Gastrocnemius medialis (tissue), 4 donors: ENCODE measurements at regions of chr3 and their contacts with region 1.

Region 1: GRCh38 chr3:45760878-45761711 is 35.2 kb downstream of the SLC6A20 start:
- DNase-seq: peak; percentile 49 to 62
- ATAC-seq: peak; percentile 89 to 95
- H3K4me3 ChIP-seq: no peak overlapping the region
- H3K27ac ChIP-seq: no peak overlapping the region
- H3K4me1 ChIP-seq: no peaks in the 10 kb centered on the region
- H3K27me3 ChIP-seq: no peaks in the 10 kb centered on the region
- CTCF ChIP-seq: peak; percentile 73 to 89 (median 83)
- POLR2A ChIP-seq: no peak

Region 2: GRCh38 chr3:45670991-45671390 is 90.1 kb before region 1 on chr3:
- in situ Hi-C with region 1: no loop called
- intact Hi-C with region 1: no loop called
- DNase-seq: no peak
- ATAC-seq: no peak
- H3K4me3 ChIP-seq: no peak overlapping the region
- H3K27ac ChIP-seq: peak overlapping the region in 1 of 4 donors; percentile 0
- H3K4me1 ChIP-seq: peaks cover 14 to 34% of the 10 kb centered on the region in 2 donors
- H3K27me3 ChIP-seq: no peaks in the 10 kb centered on the region
- CTCF ChIP-seq: no peak
- POLR2A ChIP-seq: no peak

Region 3: DNA sequence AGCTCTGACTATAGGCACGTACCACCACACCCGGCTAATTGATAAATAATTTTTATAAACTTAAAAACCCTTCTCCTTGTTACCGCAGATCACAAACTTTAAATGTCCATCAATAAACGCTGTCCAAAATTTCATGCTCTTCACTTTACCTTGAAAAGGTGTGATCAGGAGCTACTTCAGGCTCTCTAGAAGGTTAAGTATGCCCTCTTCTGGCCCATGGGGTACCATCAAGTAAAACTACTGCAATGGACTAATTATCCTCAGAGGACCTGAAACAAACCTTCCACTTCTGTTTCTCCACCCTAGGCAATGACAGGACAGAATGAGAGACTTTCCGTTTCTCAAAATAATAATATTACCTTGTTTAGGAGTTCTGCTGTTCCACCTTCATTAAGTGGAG is 71.6 kb after region 1 on chr3:
- in situ Hi-C with region 1: loop called in 3 of 4 experiments (anchors 5 kb)
- intact Hi-C with region 1: loop called (anchors 1 kb)
- DNase-seq: no peak
- ATAC-seq: peak; percentile 58 to 64
- H3K4me3 ChIP-seq: no peak overlapping the region
- H3K27ac ChIP-seq: no peak overlapping the region
- H3K4me1 ChIP-seq: no peaks in the 10 kb centered on the region
- H3K27me3 ChIP-seq: no peaks in the 10 kb centered on the region
- CTCF ChIP-seq: peak; percentile 39 to 68 (median 49)
- POLR2A ChIP-seq: no peak

Region 4: DNA sequence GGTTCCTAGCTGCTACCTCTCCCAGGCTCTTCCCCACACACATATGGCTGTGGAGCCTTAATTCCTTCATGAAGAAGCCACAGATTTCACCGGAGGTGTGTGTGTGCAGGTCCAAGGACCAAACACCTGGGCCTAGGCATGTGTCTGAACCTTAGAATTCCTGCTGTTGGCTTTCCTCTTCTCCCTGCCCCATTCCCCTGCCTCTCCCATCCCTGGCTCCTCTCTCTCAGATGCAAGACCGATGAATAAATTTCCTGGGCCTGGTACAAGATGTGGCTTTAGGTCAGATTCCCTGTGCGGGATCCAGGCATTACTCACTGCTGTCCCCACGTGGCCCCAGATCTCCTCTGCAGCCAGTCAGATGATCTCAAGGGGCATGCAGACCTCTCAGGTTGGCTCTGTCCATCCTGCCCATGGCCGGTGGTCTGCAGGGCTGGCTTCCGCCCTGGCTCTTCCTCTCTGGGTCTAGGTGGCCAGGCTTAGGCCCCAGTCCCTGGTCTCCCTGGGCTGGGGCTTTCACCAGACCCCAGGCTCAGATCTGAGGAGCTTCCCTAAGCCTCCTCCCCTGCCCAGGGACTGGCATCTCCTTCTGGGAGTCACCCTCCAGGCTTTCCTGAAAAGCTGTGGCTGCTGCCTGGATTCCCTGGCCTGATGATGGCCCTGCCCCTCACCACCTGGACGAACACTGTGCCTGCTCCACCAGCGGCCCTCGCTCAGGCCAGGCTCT is 145.7 kb after region 1 on chr3:
- in situ Hi-C with region 1: loop called in 3 of 4 experiments (anchors 25 kb)
- intact Hi-C with region 1: loop called (anchors 2 kb)
- DNase-seq: peak; percentile 20 to 48
- ATAC-seq: peak; percentile 68 to 81
- H3K4me3 ChIP-seq: no peak overlapping the region
- H3K27ac ChIP-seq: peak overlapping the region in 1 of 4 donors; percentile 53
- H3K4me1 ChIP-seq: peaks cover 3 to 19% of the 10 kb centered on the region in 2 donors
- H3K27me3 ChIP-seq: no peaks in the 10 kb centered on the region
- CTCF ChIP-seq: peak in 3 of 5 experiments; percentile 16 to 43 (median 37)
- POLR2A ChIP-seq: no peak

Region 5: DNA sequence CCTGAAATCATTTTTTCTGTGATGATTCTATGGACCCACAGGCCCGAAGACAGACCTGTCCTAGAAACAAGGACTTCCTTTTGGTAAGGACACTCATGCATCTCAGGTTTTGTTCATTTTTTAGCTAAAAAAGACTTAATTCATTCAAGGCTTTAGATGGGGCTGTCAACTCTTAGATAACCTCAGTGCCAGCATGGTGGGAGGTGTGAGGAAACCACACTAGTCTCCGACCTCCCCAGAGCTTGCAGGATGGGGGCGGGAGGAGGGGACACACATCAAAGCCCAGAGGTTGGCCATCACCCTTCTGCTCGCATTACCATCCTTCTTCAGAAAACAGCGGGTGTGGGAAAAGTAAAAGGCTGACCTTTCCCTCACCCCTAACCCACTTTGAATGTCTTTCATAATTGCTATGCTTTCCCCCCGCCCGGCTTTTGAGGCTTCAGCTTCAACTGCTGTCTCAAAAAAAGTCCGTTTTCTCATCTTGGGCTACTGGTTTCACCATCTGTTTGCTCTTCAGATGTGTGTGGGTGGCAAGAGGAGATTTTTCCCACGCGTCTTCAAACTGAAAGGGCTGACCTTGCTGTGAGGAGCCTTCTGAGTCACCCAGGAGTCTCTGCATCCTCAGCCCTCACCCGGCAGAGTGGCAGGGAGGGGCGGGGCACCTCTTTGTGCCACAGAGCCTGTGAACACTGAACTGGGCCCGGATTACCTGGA is 154.6 kb after region 1 on chr3:
- in situ Hi-C with region 1: loop called in 3 of 4 experiments (anchors 25 kb)
- intact Hi-C with region 1: no loop called
- DNase-seq: no peak
- ATAC-seq: peak in 1 of 2 donors; percentile 22
- H3K4me3 ChIP-seq: no peak overlapping the region
- H3K27ac ChIP-seq: no peak overlapping the region
- H3K4me1 ChIP-seq: no peaks in the 10 kb centered on the region
- H3K27me3 ChIP-seq: no peaks in the 10 kb centered on the region
- CTCF ChIP-seq: no peak
- POLR2A ChIP-seq: no peak

Region 6: DNA sequence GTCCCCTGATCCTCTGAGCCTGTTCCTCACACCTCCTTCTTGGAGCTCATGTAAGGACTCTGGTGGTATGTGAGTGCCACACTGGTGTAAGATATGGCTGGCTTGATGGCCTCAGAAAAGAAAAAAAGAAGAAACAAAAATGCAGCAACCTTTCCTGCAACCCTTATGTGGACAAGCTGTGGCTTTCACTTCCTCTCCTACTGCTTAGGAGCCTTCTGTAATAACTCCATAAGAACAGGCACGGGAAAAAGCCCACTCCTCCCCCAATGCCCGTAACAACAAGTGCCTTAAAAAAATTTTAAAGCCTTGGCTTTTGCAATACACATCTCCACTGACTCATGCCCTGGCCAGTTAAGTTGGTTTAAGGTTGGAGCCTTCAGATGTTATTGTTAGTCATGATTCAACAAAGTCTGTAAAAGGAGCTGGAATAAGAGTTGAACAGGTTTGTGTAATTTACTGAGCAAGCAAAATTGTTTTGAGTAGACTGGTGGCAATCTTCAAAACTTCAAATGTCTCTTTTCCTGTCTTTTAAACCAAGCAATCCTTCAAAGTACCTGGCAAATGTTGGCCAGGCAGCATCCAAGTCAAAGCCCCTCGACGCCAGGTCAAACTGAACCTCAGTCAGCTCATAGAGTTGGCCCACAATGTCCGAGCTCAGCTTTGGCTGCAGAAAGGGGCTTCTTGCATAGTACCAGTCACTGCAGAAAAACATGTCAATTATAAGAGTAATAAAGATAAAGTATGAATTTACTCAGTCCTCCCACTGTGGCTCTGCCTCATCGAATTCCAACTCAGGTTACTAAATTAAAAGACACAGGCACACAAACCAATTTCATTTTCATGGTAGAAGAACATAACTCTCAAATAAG is 211.7 kb after region 1 on chr3:
- in situ Hi-C with region 1: no loop called
- intact Hi-C with region 1: no loop called
- DNase-seq: peak; percentile 62 to 63
- ATAC-seq: peak; percentile 73 to 79
- H3K4me3 ChIP-seq: no peak overlapping the region
- H3K27ac ChIP-seq: peak overlapping the region; percentile 73 to 100 (median 98)
- H3K4me1 ChIP-seq: peaks cover 43 to 80% of the 10 kb centered on the region in 2 donors
- H3K27me3 ChIP-seq: no peaks in the 10 kb centered on the region
- CTCF ChIP-seq: no peak
- POLR2A ChIP-seq: peak in 1 of 2 donors; percentile 37

Region 7: DNA sequence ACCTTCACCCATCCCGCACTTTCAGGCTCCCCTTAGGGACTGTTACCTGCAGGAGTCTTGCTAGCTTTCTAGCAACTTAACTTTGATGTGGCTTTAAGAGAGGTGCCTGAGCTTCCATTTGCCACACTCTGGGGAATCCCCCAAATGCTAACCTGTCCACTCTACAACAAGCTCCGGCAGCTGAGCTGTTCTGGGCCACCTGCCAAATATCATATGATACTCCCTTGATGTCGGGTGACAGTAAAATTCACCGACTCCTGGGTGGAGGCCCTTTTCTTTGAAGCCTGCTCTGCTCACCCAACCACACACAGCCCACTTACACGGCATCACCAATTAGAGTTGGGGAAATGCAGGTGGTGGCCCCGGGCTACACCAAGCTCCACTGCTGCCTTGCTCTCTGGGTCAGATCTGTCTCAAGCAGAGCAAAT is 304.2 kb after region 1 on chr3:
- in situ Hi-C with region 1: loop called in 3 of 4 experiments (anchors 10 to 25 kb)
- intact Hi-C with region 1: no loop called
- DNase-seq: peak; percentile 82 to 85
- ATAC-seq: peak; percentile 96 to 98
- H3K4me3 ChIP-seq: no peak overlapping the region
- H3K27ac ChIP-seq: peak overlapping the region; percentile 49 to 79 (median 74)
- H3K4me1 ChIP-seq: peaks cover 33 to 47% of the 10 kb centered on the region in 2 donors
- H3K27me3 ChIP-seq: no peaks in the 10 kb centered on the region
- CTCF ChIP-seq: no peak
- POLR2A ChIP-seq: no peak